Right ventricle myocardium superior (tissue), 1 donor: ENCODE measurements at regions of chr15 and their contacts with region 1.

Region 1: DNA sequence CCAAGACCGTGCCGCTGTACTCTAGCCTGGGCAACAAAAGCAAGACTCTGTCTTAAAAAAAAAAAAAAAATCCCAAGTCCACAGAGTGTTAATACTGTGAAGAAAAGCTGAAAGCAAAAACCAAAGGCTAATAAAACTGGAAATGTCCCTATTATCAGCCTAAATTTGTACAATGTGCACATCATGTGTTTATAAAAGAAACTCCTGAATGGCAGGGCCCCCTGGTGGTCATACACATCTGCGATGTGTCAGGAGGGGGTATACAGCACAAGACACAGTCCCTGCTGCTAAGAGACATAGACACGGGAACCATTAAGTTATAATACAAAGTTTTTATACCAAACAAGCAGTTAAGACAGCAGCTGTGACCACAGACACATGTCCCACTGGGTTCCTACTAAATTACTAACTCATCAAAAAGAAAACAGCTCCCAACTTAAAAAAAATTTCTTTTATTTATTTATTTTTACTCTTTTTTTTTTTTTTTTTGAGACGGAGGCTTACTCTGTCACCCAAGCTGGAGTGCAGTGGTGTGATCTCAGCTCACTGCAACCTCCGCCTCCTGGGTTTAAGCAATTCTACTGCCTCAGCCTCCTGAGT is 31.0 kb downstream of the IDH2 start:
- DNase-seq: peak; percentile 88
- ATAC-seq: peak; percentile 80

Region 2: GRCh38 chr15:89760303-89761008 is 310.9 kb before region 1 on chr15:
- intact Hi-C with region 1: loop called (anchors 5 kb)
- DNase-seq: peak; percentile 92
- ATAC-seq: peak; percentile 92

Region 3: DNA sequence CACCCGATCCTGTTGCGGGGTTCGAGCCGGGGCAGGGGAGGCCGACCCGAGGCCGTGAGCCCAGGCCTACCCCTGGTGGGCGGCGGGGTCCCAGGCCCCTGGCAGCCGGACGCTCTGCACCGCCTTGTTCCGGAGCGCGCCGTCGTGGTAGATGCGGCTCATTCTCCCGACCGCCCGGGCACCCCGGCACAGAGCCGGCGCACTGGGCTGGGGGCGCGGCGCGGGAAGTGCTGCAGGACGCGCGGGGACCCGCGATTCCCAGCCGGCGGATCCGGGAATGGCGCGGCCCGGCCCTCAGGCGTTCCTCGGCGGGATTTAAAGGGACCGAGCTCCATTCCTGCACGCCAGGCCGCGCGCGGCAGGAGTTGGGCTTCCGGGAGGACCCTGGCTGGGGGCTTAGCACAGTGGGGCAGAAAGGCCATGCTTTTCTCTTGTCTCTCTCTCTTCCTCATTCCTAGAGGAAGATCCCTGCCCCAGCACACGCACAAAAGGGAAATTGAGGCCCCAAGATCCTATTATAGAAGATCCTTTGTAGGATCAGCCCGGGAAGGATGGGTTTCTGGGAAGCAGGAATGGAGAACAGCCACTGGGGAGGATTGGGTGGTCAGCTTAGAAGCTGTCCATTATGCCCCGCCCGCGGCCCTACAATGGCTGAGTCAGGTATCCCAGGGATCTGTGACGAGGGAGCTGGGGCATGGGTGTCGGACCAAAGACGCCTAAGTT is 158.5 kb before region 1 on chr15 and contains the start of gene ARPIN:
- intact Hi-C with region 1: loop called (anchors 5 kb)
- DNase-seq: peak; percentile 73
- ATAC-seq: peak; percentile 94
- total RNA-seq, gene ARPIN: 10.6 TPM

Region 4: GRCh38 chr15:90001683-90002427 is 69.5 kb before region 1 on chr15:
- intact Hi-C with region 1: loop called (anchors 5 kb)
- DNase-seq: peak; percentile 74
- ATAC-seq: peak; percentile 42

Region 5: GRCh38 chr15:90143166-90143655 is 71.9 kb after region 1 on chr15:
- intact Hi-C with region 1: no loop called
- DNase-seq: peak; percentile 73
- ATAC-seq: peak; percentile 75